ENCODE measurements at regions of chr15 and their contacts with region 1.

Region 1: DNA sequence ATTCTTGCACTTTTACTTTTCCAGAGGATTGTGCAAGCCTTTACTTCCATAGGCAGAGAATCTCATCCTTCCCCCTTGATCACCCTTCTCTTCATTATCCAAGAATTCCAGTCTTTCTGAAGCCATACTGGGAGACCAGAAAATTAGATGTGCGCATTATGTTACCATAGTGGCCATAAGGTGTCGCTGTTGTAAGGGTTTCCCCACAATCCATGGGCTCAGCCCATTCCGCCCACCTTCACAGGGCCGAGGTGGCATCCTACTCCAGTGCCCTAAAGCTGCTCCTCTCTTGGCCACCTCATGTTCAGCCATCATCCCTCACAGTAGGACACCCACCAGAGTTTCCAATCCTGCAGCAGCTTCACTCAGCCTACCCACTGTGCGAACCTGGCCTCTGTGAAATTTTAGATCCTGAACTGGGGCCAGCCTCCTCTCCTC is 35.0 kb downstream of the CTSH start:
- DNase-seq: peak; percentile 66
- H3K4me3 Mint-ChIP-seq: no peak overlapping the region
- H3K27ac Mint-ChIP-seq: no peak overlapping the region
- H3K4me1 Mint-ChIP-seq: peaks cover 9% of the 10 kb centered on the region
- H3K27me3 Mint-ChIP-seq: no peaks in the 10 kb centered on the region
- CTCF ChIP-seq: peak; percentile 48

Region 2: DNA sequence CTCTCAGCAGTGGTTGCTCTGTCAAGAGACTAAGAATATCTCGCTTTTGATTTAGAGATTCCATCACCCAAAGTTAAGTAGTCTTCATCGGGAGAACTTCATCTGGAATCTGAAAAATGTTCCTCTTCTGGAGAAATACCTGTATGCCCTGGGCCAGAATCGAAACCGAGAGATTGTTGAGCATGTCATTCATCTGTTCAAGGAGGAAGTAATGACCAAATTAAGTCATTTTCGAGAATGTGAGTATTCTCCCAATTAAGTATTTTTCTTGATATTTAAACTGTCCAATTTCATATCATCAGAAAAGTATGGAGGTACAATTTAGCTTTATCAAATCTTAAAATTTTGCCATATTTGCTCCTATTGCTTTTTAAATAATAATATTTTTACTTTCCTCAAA is 382.5 kb before region 1 on chr15:
- CTCF ChIA-PET with region 1: no interaction called
- POLR2A ChIA-PET with region 1: no interaction called
- intact Hi-C with region 1: no loop called
- DNase-seq: no peak
- H3K4me3 Mint-ChIP-seq: no peak overlapping the region
- H3K27ac Mint-ChIP-seq: no peak overlapping the region
- H3K4me1 Mint-ChIP-seq: no peaks in the 10 kb centered on the region
- H3K27me3 Mint-ChIP-seq: no peaks in the 10 kb centered on the region
- CTCF ChIP-seq: no peak

Region 3: DNA sequence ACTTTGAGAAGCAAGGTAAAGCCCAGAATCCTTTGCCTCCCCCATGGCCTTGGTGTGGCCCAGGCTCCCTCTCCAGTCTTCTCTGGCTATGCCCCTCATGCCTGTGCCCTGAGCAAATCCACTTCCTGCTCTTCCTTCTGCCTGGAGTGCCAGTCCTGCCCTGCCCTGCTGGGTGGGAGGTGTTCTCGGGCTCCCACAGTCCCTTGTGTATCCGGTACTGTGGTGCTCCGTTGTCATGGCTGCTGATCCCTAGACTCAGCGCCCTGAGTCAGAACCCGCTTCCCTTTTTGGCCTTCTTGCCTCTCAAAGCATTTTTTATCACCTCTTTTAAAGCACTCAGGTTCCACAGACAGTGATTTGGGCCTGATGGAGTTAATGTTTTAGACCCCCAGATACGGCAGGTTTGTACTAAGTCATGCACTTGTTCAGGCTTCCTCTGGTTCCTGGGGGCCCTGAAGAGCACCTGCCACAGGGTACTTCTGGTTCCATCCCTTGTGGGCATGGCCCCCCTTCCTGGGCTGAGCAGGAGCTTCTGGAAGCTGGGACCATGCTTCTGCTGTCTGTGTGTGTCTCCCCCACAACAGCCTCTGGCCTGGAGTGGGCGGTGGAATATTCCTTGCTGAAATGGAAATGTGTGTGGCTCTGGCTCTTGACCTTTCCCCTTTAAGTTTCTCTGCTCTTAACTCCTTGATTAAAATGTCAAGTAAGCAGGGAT is 69.0 kb before region 1 on chr15:
- CTCF ChIA-PET with region 1: no interaction called
- POLR2A ChIA-PET with region 1: no interaction called
- intact Hi-C with region 1: no loop called
- DNase-seq: no peak
- H3K4me3 Mint-ChIP-seq: no peak overlapping the region
- H3K27ac Mint-ChIP-seq: no peak overlapping the region
- H3K4me1 Mint-ChIP-seq: no peaks in the 10 kb centered on the region
- H3K27me3 Mint-ChIP-seq: no peaks in the 10 kb centered on the region
- CTCF ChIP-seq: no peak

Region 4: GRCh38 chr15:78950904-78951840 is 41.4 kb after region 1 on chr15:
- CTCF ChIA-PET with region 1: interaction called, 3 read pairs
- POLR2A ChIA-PET with region 1: no interaction called
- intact Hi-C with region 1: loop called (anchors 2 kb)
- DNase-seq: no peak
- H3K4me3 Mint-ChIP-seq: no peak overlapping the region
- H3K27ac Mint-ChIP-seq: no peak overlapping the region
- H3K4me1 Mint-ChIP-seq: peaks cover 17% of the 10 kb centered on the region
- H3K27me3 Mint-ChIP-seq: no peaks in the 10 kb centered on the region
- CTCF ChIP-seq: no peak

Measured in MCF 10A (cell line).